ENCODE measurements at regions of chr21 and their contacts with region 1.

Region 1: GRCh38 chr21:36319765-36320420 is at the start of gene MORC3:
- DNase-seq: peak; percentile 96 to 99 (median 98)
- ATAC-seq: peak; percentile 87
- H3K4me3 ChIP-seq: peak within 1 kb of the TSS; percentile 88
- H3K4me3 Mint-ChIP-seq: peak within 1 kb of the TSS; percentile 90
- H3K27ac ChIP-seq: peak within 1 kb of the TSS; percentile 81 to 96
- H3K27ac Mint-ChIP-seq: peak within 1 kb of the TSS; percentile 98
- H3K4me1 ChIP-seq: peaks cover 22% of the 10 kb centered on the region
- H3K4me1 Mint-ChIP-seq: peaks cover 39% of the 10 kb centered on the region
- H3K27me3 ChIP-seq: no peaks in the 10 kb centered on the region
- H3K27me3 Mint-ChIP-seq: no peaks in the 10 kb centered on the region
- CTCF ChIP-seq: no peak
- total RNA-seq, gene MORC3: 70.2 to 71.0 TPM

Region 2: DNA sequence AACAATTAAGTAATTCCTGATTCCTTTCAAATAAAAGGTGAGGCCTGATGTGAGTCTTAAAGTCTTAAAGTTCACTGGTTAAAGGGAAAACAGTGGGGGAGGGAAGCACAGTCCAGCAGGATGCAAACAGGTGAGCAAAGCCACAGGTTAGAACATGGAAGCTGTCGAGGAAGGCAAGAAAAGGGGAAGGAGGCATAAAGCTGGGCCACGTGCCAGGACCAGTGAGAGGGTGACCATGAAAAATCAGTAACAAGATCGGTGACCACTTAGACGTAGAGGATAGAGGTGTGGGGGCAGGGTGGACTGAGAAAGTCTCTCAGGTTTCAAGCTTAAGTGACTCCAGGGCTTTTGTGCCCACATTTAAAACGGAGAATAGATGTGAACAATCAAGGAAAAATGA is 490.8 kb before region 1 on chr21:
- CTCF ChIA-PET with region 1: no interaction called
- POLR2A ChIA-PET with region 1: no interaction called
- intact Hi-C with region 1: no loop called
- DNase-seq: no peak
- ATAC-seq: no peak
- H3K4me3 ChIP-seq: no peak overlapping the region
- H3K4me3 Mint-ChIP-seq: no peak overlapping the region
- H3K27ac ChIP-seq: no peak overlapping the region
- H3K27ac Mint-ChIP-seq: no peak overlapping the region
- H3K4me1 ChIP-seq: no peaks in the 10 kb centered on the region
- H3K4me1 Mint-ChIP-seq: no peaks in the 10 kb centered on the region
- H3K27me3 ChIP-seq: peaks cover 3 to 8% of the 10 kb centered on the region in 2 experiments
- H3K27me3 Mint-ChIP-seq: peaks cover 22% of the 10 kb centered on the region
- CTCF ChIP-seq: no peak

Region 3: GRCh38 chr21:36060159-36060921 is 259.6 kb before region 1 on chr21 and contains the start of gene SETD4:
- CTCF ChIA-PET with region 1: no interaction called
- POLR2A ChIA-PET with region 1: interaction called, 8 read pairs
- intact Hi-C with region 1: loop called in 1 of 2 experiments (anchors 5 kb)
- DNase-seq: peak; percentile 85 to 96 (median 91)
- ATAC-seq: peak; percentile 86
- H3K4me3 ChIP-seq: peak within 1 kb of the TSS; percentile 85
- H3K4me3 Mint-ChIP-seq: peak within 1 kb of the TSS; percentile 96
- H3K27ac ChIP-seq: peak within 1 kb of the TSS; percentile 89 to 93
- H3K27ac Mint-ChIP-seq: peak within 1 kb of the TSS; percentile 97
- H3K4me1 ChIP-seq: peaks cover 20% of the 10 kb centered on the region
- H3K4me1 Mint-ChIP-seq: peaks cover 21% of the 10 kb centered on the region
- H3K27me3 ChIP-seq: no peaks in the 10 kb centered on the region
- H3K27me3 Mint-ChIP-seq: no peaks in the 10 kb centered on the region
- CTCF ChIP-seq: no peak
- total RNA-seq, gene SETD4: 10.8 to 12.3 TPM

Region 4: GRCh38 chr21:36260030-36260787 is 59.7 kb before region 1 on chr21:
- CTCF ChIA-PET with region 1: interaction called, 5 read pairs
- POLR2A ChIA-PET with region 1: interaction called, 24 read pairs
- intact Hi-C with region 1: loop called (anchors 1 kb)
- DNase-seq: peak in 12 of 14 experiments; percentile 13 to 81 (median 40)
- ATAC-seq: peak; percentile 93
- H3K4me3 ChIP-seq: peak overlapping the region; percentile 50
- H3K4me3 Mint-ChIP-seq: peak overlapping the region; percentile 89
- H3K27ac ChIP-seq: peak overlapping the region in 1 of 2 donors; percentile 27
- H3K27ac Mint-ChIP-seq: peak overlapping the region; percentile 93
- H3K4me1 ChIP-seq: peaks cover 9% of the 10 kb centered on the region
- H3K4me1 Mint-ChIP-seq: peaks cover 9% of the 10 kb centered on the region
- H3K27me3 ChIP-seq: no peaks in the 10 kb centered on the region
- H3K27me3 Mint-ChIP-seq: no peaks in the 10 kb centered on the region
- CTCF ChIP-seq: peak; percentile 75

Region 5: GRCh38 chr21:36297921-36298594 is 21.8 kb before region 1 on chr21:
- CTCF ChIA-PET with region 1: interaction called, 17 read pairs
- POLR2A ChIA-PET with region 1: interaction called, 329 read pairs
- intact Hi-C with region 1: loop called (anchors 1 kb)
- DNase-seq: peak; percentile 60 to 92 (median 76)
- ATAC-seq: peak; percentile 94
- H3K4me3 ChIP-seq: peak overlapping the region; percentile 54
- H3K4me3 Mint-ChIP-seq: peak overlapping the region; percentile 67
- H3K27ac ChIP-seq: peak overlapping the region; percentile 87 to 96
- H3K27ac Mint-ChIP-seq: peak overlapping the region; percentile 96
- H3K4me1 ChIP-seq: peaks cover 40% of the 10 kb centered on the region
- H3K4me1 Mint-ChIP-seq: peaks cover 39% of the 10 kb centered on the region
- H3K27me3 ChIP-seq: no peaks in the 10 kb centered on the region
- H3K27me3 Mint-ChIP-seq: no peaks in the 10 kb centered on the region
- CTCF ChIP-seq: no peak

Region 6: DNA sequence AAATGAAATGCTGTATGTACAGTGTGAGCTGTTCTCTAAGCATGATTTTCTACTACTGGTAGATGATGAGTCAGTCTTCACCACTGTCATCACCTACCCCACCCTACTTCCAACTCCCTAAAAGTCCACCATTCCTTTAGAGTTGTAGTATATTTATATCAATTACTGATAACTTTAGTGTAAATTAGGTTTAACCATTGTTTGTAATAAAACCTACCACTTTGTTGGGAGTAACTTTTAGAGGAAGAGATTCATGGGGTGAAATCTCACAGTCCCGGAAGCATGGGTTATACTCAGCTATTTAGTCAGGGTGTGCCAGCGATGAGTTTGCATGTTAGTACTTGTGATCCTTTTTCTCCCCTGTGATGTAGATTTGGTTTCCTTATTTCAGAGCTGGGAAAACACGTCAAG is 17.2 kb after region 1 on chr21:
- CTCF ChIA-PET with region 1: no interaction called
- POLR2A ChIA-PET with region 1: interaction called, 12 read pairs
- intact Hi-C with region 1: no loop called
- DNase-seq: no peak
- ATAC-seq: no peak
- H3K4me3 ChIP-seq: no peak overlapping the region
- H3K4me3 Mint-ChIP-seq: no peak overlapping the region
- H3K27ac ChIP-seq: no peak overlapping the region
- H3K27ac Mint-ChIP-seq: no peak overlapping the region
- H3K4me1 ChIP-seq: no peaks in the 10 kb centered on the region
- H3K4me1 Mint-ChIP-seq: peaks cover 28% of the 10 kb centered on the region
- H3K27me3 ChIP-seq: no peaks in the 10 kb centered on the region
- H3K27me3 Mint-ChIP-seq: no peaks in the 10 kb centered on the region
- CTCF ChIP-seq: no peak

Region 7: GRCh38 chr21:36403713-36404112 is 83.8 kb after region 1 on chr21:
- CTCF ChIA-PET with region 1: no interaction called
- POLR2A ChIA-PET with region 1: no interaction called
- intact Hi-C with region 1: no loop called
- DNase-seq: peak in 2 of 14 experiments; percentile 8 to 26
- ATAC-seq: no peak
- H3K4me3 ChIP-seq: no peak overlapping the region
- H3K4me3 Mint-ChIP-seq: no peak overlapping the region
- H3K27ac ChIP-seq: no peak overlapping the region
- H3K27ac Mint-ChIP-seq: no peak overlapping the region
- H3K4me1 ChIP-seq: no peaks in the 10 kb centered on the region
- H3K4me1 Mint-ChIP-seq: no peaks in the 10 kb centered on the region
- H3K27me3 ChIP-seq: no peaks in the 10 kb centered on the region
- H3K27me3 Mint-ChIP-seq: no peaks in the 10 kb centered on the region
- CTCF ChIP-seq: no peak

Measured in CD4-positive, alpha-beta T cell (primary cell).